BJ (cell line): ENCODE measurements at regions of chr22 and their contacts with region 1.

Region 1: DNA sequence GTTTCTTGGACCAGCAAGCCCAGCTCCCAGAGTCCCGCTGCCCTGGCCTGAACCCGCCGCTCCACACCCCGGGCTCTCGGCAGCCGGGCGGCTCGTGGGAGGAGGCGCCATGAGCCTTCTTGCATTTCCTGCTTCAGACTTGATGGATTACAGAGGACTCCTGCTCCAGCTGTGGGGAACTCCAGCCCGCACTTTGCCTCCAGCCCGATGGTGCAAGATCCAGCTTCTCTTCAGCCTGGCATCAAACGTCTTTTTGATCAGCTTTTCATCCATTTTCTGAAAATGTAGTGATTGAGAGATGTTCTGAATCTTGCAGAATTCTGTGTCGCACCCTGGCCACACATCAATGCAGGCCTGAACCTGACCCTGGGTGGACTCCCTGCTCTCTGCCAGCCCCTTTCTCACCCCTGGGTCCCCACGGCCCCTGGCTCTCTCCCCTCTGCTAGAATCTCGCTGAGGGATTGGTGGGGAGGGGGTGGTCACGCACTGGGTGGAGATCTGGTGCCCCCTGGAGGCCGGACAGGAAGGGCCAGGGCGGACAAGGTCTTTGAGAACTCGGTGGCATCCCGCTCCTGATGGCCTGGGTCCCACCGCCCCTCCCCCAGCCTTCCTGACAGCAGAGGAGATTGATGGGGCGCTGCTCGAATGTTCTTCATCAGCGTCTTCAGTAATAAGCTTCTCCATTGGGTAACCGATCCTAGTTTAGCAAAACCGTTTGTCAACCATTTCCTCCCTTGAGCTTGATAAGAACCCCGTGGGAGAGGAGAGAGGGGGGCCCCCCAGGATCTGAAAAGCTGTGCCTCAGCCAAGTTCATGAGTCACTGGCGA is 12.1 kb upstream of the NFAM1 start:
- DNase-seq: peak; percentile 59
- H3K4me3 ChIP-seq: peak overlapping the region; percentile 10
- H3K27me3 ChIP-seq: no peaks in the 10 kb centered on the region; the same call in 1 of the 2 replicates
- CTCF ChIP-seq: peak; percentile 82

Region 2: GRCh38 chr22:41966607-41967240 is 477.6 kb before region 1 on chr22:
- CTCF ChIA-PET with region 1: interaction called, 10 read pairs
- POLR2A ChIA-PET with region 1: no interaction called
- DNase-seq: peak; percentile 56
- H3K4me3 ChIP-seq: no peak overlapping the region
- H3K27me3 ChIP-seq: 0 out of 2 replicates have a peak, but pooled peaks cover 1% of the 10 kb centered on the region
- CTCF ChIP-seq: peak; percentile 53

Region 3: GRCh38 chr22:42090596-42091454 is 353.5 kb before region 1 on chr22 and contains the start of gene NDUFA6:
- CTCF ChIA-PET with region 1: interaction called, 46 read pairs
- POLR2A ChIA-PET with region 1: no interaction called
- DNase-seq: peak; percentile 97
- H3K4me3 ChIP-seq: peak within 1 kb of the TSS; percentile 59
- H3K27me3 ChIP-seq: no peaks in the 10 kb centered on the region
- CTCF ChIP-seq: peak; percentile 92
- polyA plus RNA-seq, gene NDUFA6: 76.0 and 85.6 TPM in 2 replicates

Region 4: DNA sequence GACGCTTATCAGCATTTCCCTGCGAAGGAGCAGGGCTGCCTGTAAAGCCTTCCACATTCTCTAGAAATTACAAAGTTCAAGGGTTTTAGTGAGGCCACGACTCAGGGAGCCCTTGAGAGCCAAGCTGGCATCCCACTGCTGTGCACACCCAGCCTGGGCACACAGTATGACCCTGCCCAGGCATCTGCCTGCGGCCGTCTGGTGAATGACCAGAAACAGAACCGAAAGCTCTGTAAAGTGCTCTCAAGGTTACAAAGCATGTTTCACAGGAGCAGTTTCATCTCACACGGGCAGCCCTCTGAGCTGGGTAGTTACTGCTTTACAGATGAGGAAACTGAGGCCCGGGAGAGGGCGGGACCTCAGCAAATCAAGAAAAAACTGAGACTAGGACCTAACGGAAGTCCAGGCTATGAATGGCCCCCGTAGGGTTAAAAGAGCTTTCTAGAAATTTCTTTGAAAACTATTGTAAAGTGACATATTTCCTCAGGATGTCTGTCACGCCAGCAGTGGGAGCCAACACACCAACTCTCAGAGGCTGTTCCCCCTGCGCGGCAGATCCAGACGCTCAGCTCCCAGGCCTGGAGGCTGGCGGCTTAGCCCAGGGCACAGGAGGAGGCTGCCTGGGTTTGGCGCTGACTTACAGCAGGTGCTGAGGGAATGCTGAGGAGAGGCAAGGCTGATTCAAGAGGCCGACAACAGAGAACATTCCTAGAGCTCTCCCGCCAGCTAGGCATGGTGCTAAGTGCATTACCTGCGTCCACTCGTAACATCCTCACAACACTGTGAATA is 166.1 kb before region 1 on chr22:
- CTCF ChIA-PET with region 1: interaction called, 13 read pairs
- POLR2A ChIA-PET with region 1: no interaction called
- DNase-seq: no peak
- H3K4me3 ChIP-seq: no peak overlapping the region
- H3K27me3 ChIP-seq: peaks cover 6% of the 10 kb centered on the region; the same call in 1 of the 2 replicates
- CTCF ChIP-seq: peak; percentile 27; the same call in 1 of the 2 replicates

Region 5: DNA sequence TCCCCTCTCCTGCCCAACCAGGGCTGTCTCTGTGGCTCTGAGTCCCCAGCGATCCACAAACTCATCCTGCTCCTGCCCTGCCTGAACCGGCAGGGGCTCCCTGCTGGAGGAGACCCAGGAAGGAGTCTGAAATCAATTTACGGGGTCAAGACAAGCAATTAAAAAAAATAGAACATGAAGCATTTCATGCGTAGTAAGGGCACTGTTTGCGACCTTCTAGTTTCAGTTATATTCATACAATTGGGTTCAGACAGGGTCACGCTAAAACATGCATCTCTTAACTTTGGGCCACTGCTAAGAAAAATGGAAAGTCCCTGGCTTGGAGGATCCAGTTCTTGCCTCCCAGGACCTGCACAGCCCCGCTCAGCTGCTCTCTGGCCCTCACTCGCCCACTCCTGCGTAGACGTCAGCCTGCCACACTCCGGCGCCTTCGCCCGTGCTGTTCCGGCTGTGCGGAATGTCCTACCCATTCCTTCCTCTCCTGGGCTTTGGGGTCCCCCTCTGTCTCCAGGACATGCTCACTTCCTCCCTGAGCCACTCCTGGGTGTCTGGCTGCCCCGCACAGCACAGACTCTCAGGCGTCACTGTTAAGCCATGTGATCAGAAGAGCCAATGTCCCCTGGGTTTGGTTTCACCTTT is 24.9 kb before region 1 on chr22:
- CTCF ChIA-PET with region 1: no interaction called
- POLR2A ChIA-PET with region 1: no interaction called
- DNase-seq: no peak
- H3K4me3 ChIP-seq: no peak overlapping the region
- H3K27me3 ChIP-seq: no peaks in the 10 kb centered on the region
- CTCF ChIP-seq: no peak

Region 6: DNA sequence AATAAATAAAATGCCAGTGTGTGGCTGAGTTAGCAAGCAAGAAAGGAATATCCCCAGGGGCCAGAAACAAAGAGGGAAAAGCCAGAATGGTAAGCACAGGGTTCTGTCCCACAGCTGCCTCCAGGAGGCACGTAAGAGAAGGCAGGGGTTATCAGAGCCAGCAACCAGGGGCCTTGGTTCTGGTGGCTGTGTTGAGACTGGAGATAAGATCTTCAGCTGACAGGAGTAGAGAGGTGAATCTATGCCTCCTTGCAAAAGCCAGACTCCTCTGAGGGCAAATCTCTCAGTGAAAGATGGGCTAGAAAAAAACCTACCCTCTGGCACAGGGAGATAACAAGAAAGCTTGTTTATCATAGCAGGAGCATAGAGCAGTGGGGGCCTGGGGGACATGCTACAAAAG is 17.7 kb after region 1 on chr22:
- CTCF ChIA-PET with region 1: interaction called, 10 read pairs
- POLR2A ChIA-PET with region 1: no interaction called
- DNase-seq: no peak
- H3K4me3 ChIP-seq: no peak overlapping the region
- H3K27me3 ChIP-seq: peaks cover 18% of the 10 kb centered on the region
- CTCF ChIP-seq: no peak

Region 7: GRCh38 chr22:42473484-42474193 is 29.3 kb after region 1 on chr22:
- CTCF ChIA-PET with region 1: interaction called, 12 read pairs
- POLR2A ChIA-PET with region 1: no interaction called
- DNase-seq: peak; percentile 9
- H3K4me3 ChIP-seq: no peak overlapping the region
- H3K27me3 ChIP-seq: 0 out of 2 replicates have a peak, but pooled peaks cover 3% of the 10 kb centered on the region
- CTCF ChIP-seq: peak; percentile 80

Region 8: DNA sequence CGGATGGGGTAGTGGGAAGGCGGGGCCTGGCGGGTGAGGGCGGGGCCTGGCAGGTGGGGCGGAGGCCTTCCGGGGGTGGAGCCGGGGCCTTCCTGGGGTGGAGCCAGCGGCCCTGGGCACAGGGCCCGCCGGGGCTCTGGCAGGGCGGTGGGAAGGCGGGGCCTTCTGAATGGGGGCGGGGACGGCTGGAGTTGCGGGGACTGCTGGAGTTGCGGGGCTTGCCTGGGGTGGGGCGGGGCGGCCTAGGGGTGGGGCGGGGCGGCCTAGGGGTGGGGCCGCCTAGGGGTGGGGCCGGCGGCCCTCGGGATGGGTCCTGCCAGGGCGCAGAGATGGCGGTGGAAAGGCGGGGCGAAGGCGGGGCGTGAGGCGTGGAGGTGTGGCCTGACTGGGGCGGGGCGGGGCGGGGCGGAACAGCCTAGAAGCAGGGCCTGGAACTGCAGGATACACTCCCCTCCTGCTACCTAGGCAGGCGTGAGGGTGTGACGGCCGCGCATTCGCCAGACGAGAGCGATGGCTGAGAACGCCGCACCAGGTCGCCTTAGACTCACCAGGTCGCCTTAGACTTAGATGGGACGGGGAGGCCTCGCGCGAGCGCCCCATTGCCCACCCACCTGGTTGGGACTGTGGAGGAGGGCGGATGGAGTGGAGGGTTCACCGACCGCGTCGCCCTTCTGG is 56.0 kb after region 1 on chr22:
- CTCF ChIA-PET with region 1: no interaction called
- POLR2A ChIA-PET with region 1: no interaction called
- DNase-seq: no peak
- H3K4me3 ChIP-seq: peak overlapping the region; percentile 43
- H3K27me3 ChIP-seq: no peaks in the 10 kb centered on the region; the same call in 1 of the 2 replicates
- CTCF ChIP-seq: no peak